ENCODE measurements at regions of chr1 and their contacts with region 1.

Region 1: DNA sequence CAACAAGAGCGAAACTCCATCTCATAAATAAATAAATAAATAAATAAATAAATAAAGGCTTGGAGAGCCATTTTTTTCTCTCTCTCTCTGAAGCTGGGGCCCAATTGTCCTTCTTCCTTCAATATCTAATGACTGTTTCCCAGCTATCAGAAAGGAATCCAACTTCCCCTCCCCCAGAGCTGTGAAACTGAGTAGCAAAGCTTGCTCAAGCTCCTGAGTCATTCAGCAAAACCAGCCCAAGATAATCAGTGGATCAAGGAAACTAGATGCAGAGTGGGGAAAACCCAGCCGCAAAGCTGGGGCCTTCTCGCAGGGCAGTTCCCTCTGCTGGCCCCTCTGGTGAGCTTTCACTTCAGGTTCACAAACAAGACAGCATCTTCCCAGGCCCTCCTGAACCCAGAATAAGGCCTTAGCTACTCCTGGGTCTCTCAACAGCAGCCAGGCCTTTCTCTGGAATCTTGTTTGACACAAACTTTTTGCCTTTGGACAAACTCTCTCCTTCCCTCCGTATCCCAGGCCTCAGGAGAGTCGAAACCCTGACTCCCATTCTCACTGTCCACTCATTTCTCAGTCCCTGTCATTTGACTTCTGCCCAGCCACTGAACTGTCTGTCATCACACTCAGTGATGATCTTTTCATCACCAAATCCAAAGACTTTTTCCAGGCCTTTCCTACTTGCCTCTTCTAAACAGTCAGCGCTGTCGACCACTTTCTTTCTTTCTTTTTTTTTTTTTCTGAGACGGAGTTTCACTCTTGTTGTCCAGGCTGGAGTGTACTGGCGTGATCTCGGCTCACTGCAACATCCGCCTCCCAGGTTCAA is 18.0 kb upstream of the PTP4A2 start:
- DNase-seq: peak; percentile 88 to 100
- H3K4me3 ChIP-seq: peak overlapping the region; percentile 36; the same call in 1 of the 2 replicates
- H3K27ac ChIP-seq: peak overlapping the region; percentile 98
- H3K4me1 ChIP-seq: peaks cover 65% of the 10 kb centered on the region
- H3K27me3 ChIP-seq: no peaks in the 10 kb centered on the region
- CTCF ChIP-seq: peak; percentile 62

Region 2: DNA sequence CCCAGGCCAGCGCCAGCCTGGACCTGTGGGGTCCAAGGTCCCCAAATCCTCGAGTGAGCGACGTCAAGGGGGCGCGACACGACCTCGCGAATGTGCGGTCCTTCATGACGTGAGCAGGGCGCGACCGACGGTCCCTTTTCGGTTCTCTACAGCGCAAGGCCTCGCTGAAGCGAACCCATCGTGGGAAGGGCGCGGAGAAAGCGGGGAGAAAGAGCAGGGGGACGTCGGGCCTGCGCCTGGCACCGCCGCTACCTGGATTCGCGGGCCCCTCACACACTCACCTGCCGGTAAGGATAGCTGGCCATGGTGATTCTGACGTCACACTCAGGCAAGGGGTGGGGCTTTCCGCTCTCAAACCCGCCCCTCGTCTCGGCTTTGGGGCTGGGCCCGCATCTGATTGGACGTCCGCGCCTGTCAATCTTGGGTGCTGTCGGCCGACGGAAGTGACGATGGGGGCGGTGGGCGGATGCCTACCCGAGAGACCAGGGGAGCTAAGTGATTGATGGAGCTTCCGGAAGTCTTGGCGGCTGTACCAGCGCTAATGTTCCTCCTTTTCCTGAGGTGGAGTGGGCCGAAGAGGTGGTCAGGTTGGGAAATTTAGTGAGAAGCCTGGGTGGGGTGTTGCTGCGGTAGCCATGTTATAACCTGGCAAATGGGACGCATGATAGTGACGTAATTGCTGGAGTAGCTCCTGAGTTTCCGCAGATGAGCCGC is 311.4 kb before region 1 on chr1 and contains the start of gene PEF1:
- CTCF ChIA-PET with region 1: no interaction called
- POLR2A ChIA-PET with region 1: interaction called, 14 read pairs
- intact Hi-C with region 1: no loop called
- DNase-seq: peak; percentile 98 to 99
- H3K4me3 ChIP-seq: peak within 1 kb of the TSS; percentile 76
- H3K27ac ChIP-seq: peak within 1 kb of the TSS; percentile 81
- H3K4me1 ChIP-seq: peaks cover 36% of the 10 kb centered on the region
- H3K27me3 ChIP-seq: no peaks in the 10 kb centered on the region
- CTCF ChIP-seq: no peak
- total RNA-seq, gene PEF1: 40.3 and 44.5 TPM in 2 replicates

Region 3: GRCh38 chr1:31815752-31816500 is 140.2 kb before region 1 on chr1 and contains the start of gene SPOCD1:
- CTCF ChIA-PET with region 1: interaction called, 3 read pairs
- POLR2A ChIA-PET with region 1: interaction called, 3 read pairs
- intact Hi-C with region 1: loop called (anchors 5 kb)
- DNase-seq: peak; percentile 88 to 91
- H3K4me3 ChIP-seq: peak within 1 kb of the TSS; percentile 44; the same call in 1 of the 2 replicates
- H3K27ac ChIP-seq: no peak within 1 kb of the TSS
- H3K4me1 ChIP-seq: peaks cover 5% of the 10 kb centered on the region
- H3K27me3 ChIP-seq: no peaks in the 10 kb centered on the region
- CTCF ChIP-seq: peak; percentile 100
- total RNA-seq, gene SPOCD1: 10.2 and 14.6 TPM in 2 replicates

Region 4: GRCh38 chr1:31938174-31938950 is 17.8 kb before region 1 on chr1 and contains the start of gene PTP4A2:
- CTCF ChIA-PET with region 1: interaction called, 9 read pairs
- POLR2A ChIA-PET with region 1: interaction called, 21 read pairs
- intact Hi-C with region 1: loop called (anchors 1 kb)
- DNase-seq: peak; percentile 96 to 97
- H3K4me3 ChIP-seq: peak within 1 kb of the TSS; percentile 86
- H3K27ac ChIP-seq: peak within 1 kb of the TSS; percentile 95
- H3K4me1 ChIP-seq: peaks cover 78% of the 10 kb centered on the region
- H3K27me3 ChIP-seq: no peaks in the 10 kb centered on the region
- CTCF ChIP-seq: no peak; the same call in 1 of the 2 replicates
- total RNA-seq, gene PTP4A2: 149 and 201 TPM in 2 replicates

Region 5: GRCh38 chr1:32063261-32063681 is 107.1 kb after region 1 on chr1:
- CTCF ChIA-PET with region 1: no interaction called
- POLR2A ChIA-PET with region 1: no interaction called
- intact Hi-C with region 1: loop called (anchors 10 kb)
- DNase-seq: no peak
- H3K4me3 ChIP-seq: no peak overlapping the region
- H3K27ac ChIP-seq: peak overlapping the region; percentile 21; the same call in 1 of the 2 replicates
- H3K4me1 ChIP-seq: peaks cover 24% of the 10 kb centered on the region
- H3K27me3 ChIP-seq: no peaks in the 10 kb centered on the region
- CTCF ChIP-seq: peak; percentile 77

Measured in PC-9 (cell line).